ENCODE measurements at regions of chr2 and their contacts with region 1.

Region 1: DNA sequence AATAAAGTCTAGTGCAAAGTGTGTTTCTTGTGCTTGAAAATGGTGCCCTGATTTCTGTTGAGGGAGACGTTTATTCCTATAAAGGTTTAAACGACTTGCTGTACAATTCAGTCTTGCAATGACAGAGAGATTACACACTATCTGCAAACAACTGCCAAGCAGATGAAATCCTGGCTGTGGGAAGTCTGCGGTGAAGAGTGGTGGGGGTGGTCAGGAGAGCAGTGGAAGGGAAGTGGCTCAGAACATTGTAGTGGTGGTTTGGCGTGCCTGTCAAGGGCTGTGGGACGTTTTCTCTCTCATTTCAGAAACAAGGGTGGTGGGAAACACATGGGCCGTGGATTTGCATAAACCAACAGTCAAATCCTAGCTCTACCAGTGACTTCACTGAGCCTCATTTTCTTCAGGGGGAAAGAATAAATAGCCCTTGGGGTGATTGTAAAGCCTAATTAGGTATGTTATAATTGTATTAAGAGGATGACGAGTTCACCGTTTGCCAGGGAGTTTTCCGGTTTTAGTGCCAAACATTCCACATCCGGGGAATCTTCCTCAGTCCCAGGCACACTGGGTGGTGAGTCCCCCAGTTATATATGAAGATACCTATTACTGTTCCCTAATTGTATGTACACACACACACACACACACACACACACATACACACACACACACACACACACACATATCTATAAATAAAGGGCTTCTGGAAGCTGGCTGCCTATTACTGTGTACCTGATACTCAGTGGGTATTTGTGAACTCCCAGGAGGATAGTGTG is 115.0 kb downstream of the SPTBN1 start:
- DNase-seq: peak; percentile 71
- CTCF ChIP-seq: no peak

Region 2: DNA sequence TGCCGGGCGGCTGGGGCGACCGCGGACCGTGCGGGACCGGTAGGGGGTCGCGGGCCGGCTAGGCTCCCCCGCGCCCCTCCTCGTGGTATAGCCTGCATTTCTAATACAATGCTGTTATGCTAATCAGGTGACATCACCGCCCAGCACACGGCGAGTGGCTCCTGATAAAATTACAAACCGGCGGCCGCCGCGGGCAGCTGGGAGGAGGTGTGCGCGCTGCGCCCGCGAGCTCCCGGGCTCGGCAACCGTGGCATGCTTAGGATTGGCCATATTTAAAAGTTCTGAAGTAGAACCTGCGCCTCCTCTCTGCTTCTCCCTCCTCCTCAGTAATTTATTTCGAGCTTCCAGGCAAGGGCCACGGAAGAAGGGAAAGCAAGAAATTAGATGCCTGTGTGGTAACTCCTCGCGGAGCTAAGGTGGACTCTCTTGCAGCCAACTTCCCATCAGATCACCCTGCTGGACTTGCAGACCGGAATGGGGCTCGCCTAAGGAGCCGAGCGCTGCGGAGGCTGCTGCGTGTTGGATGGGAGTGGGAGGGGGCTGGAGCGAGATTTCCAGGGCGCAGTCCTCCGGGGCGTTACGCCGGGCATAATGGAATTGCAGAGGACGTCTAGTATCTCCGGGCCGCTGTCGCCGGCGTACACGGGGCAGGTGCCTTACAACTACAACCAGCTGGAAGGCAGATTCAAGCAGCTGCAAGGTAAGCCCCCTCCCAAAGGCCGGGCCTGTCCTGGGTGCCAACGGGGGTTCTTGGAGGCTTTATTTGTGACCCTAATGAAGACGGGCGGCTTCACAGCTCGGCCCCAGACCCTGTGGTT is 12.7 kb before region 1 on chr2:
- CTCF ChIA-PET with region 1: interaction called, 26 read pairs
- POLR2A ChIA-PET with region 1: interaction called, 3 read pairs
- DNase-seq: peak; percentile 67
- CTCF ChIP-seq: no peak

Region 3: DNA sequence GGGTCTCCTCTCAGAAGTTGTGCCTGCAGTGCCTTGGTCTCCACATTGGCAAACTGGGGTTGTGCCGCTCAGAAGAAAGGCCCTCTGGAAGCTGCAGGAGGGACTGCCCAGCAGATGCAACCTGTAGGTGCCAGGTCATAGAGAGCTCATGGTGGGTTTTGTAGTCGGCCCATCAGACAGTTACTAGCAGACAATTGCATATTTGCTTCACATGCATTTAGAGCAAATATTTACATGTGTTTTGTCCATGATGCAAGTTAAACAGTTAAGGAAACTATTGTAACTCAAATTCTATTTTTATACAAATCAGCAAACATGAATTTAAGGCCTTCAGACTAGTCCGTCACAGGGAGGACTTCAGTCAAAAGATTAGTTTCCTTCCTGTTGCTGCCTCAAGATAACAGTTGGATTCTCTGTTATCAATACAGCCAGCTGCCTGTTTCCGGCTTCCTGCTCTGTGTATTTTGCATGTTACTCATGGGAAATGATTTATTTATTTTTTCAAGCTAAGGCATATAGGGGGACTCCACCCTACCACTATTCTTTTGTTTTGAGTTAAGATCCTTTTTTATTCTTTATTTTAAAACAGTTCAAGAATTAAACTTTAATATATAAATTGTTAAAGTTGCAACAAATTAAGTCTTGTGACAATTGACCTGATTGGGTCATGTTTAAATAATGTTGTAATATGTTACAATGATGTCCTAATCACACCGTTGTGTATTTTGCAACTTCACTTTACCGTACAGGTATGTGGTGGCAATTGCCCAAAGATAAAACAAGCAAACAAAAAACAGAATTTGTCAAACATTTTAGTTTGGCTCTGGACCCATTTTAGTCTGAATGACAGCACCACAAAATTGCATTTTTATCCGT is 18.5 kb after region 1 on chr2:
- CTCF ChIA-PET with region 1: interaction called, 19 read pairs
- POLR2A ChIA-PET with region 1: interaction called, 3 read pairs
- DNase-seq: no peak
- CTCF ChIP-seq: no peak

Region 4: GRCh38 chr2:54641988-54642387 is 70.9 kb after region 1 on chr2:
- CTCF ChIA-PET with region 1: no interaction called
- POLR2A ChIA-PET with region 1: no interaction called
- DNase-seq: no peak
- CTCF ChIP-seq: no peak